PC-3 (cell line): ENCODE measurements at regions of chr20 and their contacts with region 1.

Region 1: DNA sequence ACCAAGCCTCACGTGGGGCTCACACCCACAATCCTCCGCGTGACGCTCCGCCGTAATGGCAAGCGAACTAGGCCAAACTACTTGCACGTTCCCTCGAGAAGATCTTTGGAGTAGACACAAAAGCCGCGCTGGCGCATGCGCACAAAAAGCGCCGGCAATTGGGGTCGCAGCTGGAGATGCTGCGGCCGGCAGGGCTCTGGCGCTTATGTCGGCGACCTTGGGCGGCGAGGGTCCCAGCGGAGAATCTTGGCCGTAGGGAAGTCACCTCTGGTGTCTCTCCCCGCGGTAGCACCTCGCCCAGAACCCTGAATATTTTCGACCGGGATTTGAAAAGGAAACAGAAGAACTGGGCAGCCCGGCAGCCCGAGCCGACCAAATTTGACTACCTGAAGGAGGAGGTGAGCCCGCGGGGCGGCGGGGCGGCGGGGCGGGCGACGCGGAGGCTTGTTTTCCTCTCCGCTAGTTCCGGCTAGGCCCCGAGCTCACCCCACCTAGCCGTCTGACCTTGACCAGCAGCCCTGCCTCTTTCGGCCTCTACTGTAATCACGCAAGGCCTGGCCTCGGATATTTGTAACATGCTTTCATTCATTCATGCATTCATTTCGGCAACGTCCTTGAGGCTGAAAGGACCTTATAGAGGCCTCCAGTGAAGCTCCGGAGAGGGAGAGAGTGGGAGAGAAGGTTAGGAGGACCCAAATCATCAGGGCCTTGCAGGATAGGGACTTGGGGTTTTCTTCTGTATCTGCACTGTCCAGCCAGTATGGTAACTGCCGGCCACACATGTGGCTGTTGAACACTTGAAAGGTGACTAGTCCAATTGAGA is at the starts of genes ESF1 and NDUFAF5:
- DNase-seq: peak; percentile 98
- ATAC-seq: peak; percentile 80
- H3K4me3 ChIP-seq: peak within 1 kb of the TSS; percentile 82
- H3K27ac ChIP-seq: peak within 1 kb of the TSS; percentile 66
- H3K4me1 ChIP-seq: peaks cover 19% of the 10 kb centered on the region
- H3K27me3 ChIP-seq: no peaks in the 10 kb centered on the region
- CTCF ChIP-seq: no peak
- total RNA-seq, gene ESF1: 13.7 and 18.7 TPM in 2 replicates
- total RNA-seq, gene NDUFAF5: 23.3 and 29.0 TPM in 2 replicates

Region 2: GRCh38 chr20:13243826-13244376 is 541.2 kb before region 1 on chr20:
- CTCF ChIA-PET with region 1: no interaction called
- POLR2A ChIA-PET with region 1: no interaction called
- intact Hi-C with region 1: loop called (anchors 10 kb)
- DNase-seq: peak; percentile 90
- ATAC-seq: peak; percentile 83
- H3K4me3 ChIP-seq: no peak overlapping the region
- H3K27ac ChIP-seq: peak overlapping the region; percentile 26; the same call in 1 of the 2 replicates
- H3K4me1 ChIP-seq: peaks cover 49% of the 10 kb centered on the region
- H3K27me3 ChIP-seq: no peaks in the 10 kb centered on the region; the same call in 1 of the 2 replicates
- CTCF ChIP-seq: no peak

Region 3: DNA sequence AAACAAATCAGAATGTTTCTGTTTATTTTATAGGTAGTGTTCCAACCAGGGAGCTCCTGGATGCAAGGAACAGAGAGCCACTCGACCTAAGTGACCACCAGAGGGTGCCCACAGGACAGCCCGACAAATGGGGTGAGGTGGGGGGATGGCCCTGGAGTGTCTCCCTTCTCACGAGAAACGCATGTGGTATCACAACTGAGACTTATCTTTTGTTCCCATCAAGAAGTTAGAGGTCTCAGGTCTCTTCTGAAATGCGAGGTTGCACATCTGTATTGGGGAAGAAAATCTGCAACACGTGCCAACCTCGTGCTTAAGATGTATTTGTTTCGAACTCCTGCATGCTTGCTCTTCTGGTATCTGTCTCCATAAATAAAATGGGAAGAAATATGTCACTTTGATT is 460.1 kb before region 1 on chr20:
- CTCF ChIA-PET with region 1: interaction called, 3 read pairs
- POLR2A ChIA-PET with region 1: no interaction called
- intact Hi-C with region 1: loop called (anchors 10 kb)
- DNase-seq: peak; percentile 63
- ATAC-seq: peak; percentile 94
- H3K4me3 ChIP-seq: no peak overlapping the region
- H3K27ac ChIP-seq: no peak overlapping the region
- H3K4me1 ChIP-seq: no peaks in the 10 kb centered on the region
- H3K27me3 ChIP-seq: no peaks in the 10 kb centered on the region
- CTCF ChIP-seq: peak; percentile 84

Region 4: DNA sequence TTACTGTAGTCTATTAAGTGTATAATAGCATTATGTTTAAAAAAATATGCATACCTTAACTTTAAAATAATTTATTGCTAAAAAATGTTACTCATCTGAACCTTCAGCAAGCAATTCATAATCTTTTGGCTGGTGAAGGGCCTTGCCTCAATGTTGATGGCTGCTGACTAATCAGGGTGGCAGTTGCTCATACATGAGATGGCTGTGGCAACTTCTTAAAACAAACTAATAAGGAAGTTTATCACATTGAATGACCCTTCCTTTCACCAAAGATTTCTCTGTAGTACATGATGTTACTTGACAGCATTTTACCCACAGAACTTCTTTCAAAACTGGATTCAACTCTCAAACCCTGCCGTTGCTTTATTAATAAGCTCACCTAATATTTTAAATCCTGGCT is 230.4 kb before region 1 on chr20:
- CTCF ChIA-PET with region 1: no interaction called
- POLR2A ChIA-PET with region 1: no interaction called
- intact Hi-C with region 1: loop called (anchors 5 kb)
- DNase-seq: peak; percentile 91
- ATAC-seq: peak; percentile 84
- H3K4me3 ChIP-seq: no peak overlapping the region
- H3K27ac ChIP-seq: peak overlapping the region; percentile 77
- H3K4me1 ChIP-seq: peaks cover 42% of the 10 kb centered on the region
- H3K27me3 ChIP-seq: no peaks in the 10 kb centered on the region
- CTCF ChIP-seq: no peak

Region 5: GRCh38 chr20:13610184-13610583 is 174.9 kb before region 1 on chr20:
- CTCF ChIA-PET with region 1: no interaction called
- POLR2A ChIA-PET with region 1: no interaction called
- intact Hi-C with region 1: loop called (anchors 10 kb)
- DNase-seq: no peak
- ATAC-seq: no peak
- H3K4me3 ChIP-seq: no peak overlapping the region
- H3K27ac ChIP-seq: no peak overlapping the region
- H3K4me1 ChIP-seq: no peaks in the 10 kb centered on the region
- H3K27me3 ChIP-seq: no peaks in the 10 kb centered on the region
- CTCF ChIP-seq: no peak

Region 6: GRCh38 chr20:13771853-13772453 is 13.2 kb before region 1 on chr20:
- CTCF ChIA-PET with region 1: interaction called, 14 read pairs
- POLR2A ChIA-PET with region 1: interaction called, 3 read pairs
- intact Hi-C with region 1: no loop called
- DNase-seq: peak; percentile 72
- ATAC-seq: no peak; the same call in 1 of the 2 replicates
- H3K4me3 ChIP-seq: no peak overlapping the region
- H3K27ac ChIP-seq: no peak overlapping the region
- H3K4me1 ChIP-seq: no peaks in the 10 kb centered on the region
- H3K27me3 ChIP-seq: no peaks in the 10 kb centered on the region
- CTCF ChIP-seq: peak; percentile 76

Region 7: GRCh38 chr20:13809373-13809772 is 24.3 kb after region 1 on chr20:
- CTCF ChIA-PET with region 1: no interaction called
- POLR2A ChIA-PET with region 1: no interaction called
- intact Hi-C with region 1: no loop called
- DNase-seq: no peak
- ATAC-seq: no peak
- H3K4me3 ChIP-seq: no peak overlapping the region
- H3K27ac ChIP-seq: no peak overlapping the region
- H3K4me1 ChIP-seq: no peaks in the 10 kb centered on the region
- H3K27me3 ChIP-seq: no peaks in the 10 kb centered on the region
- CTCF ChIP-seq: no peak

Region 8: GRCh38 chr20:13819885-13820645 is 35.0 kb after region 1 on chr20:
- CTCF ChIA-PET with region 1: no interaction called
- POLR2A ChIA-PET with region 1: no interaction called
- intact Hi-C with region 1: no loop called
- DNase-seq: peak; percentile 95
- ATAC-seq: peak; percentile 72
- H3K4me3 ChIP-seq: no peak overlapping the region
- H3K27ac ChIP-seq: no peak overlapping the region
- H3K4me1 ChIP-seq: peaks cover 21% of the 10 kb centered on the region
- H3K27me3 ChIP-seq: no peaks in the 10 kb centered on the region
- CTCF ChIP-seq: peak; percentile 78

Region 9: DNA sequence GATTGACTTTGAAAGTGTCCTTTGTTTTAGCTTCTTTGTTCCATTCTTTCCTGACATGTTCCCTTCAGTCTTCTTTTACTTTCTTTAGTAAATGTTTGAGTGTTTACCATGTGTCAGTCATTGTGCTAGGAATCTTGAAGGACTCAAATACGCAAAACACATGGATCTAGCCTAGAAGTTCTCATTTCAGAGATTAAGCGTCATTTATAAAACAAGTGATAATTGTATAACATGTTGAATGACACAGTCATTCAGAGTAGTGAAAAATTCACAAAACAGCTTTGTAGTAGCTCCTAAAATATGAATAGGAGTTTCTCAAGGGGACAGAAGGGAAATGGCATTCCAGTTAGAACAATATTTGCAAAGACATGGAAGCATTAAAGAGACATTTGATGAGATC is 277.1 kb after region 1 on chr20:
- CTCF ChIA-PET with region 1: interaction called, 14 read pairs
- POLR2A ChIA-PET with region 1: no interaction called
- intact Hi-C with region 1: no loop called
- DNase-seq: no peak
- ATAC-seq: no peak
- H3K4me3 ChIP-seq: no peak overlapping the region
- H3K27ac ChIP-seq: no peak overlapping the region
- H3K4me1 ChIP-seq: peaks cover 6% of the 10 kb centered on the region; the same call in 1 of the 2 replicates
- H3K27me3 ChIP-seq: no peaks in the 10 kb centered on the region
- CTCF ChIP-seq: no peak